CD4-positive, alpha-beta memory T cell (primary cell): ENCODE measurements at regions of chr12 and their contacts with region 1.

Region 1: GRCh38 chr12:54419088-54419892 is at the start of gene ITGA5:
- DNase-seq: peak in 3 of 5 donors; percentile 23 to 57 (median 27)
- H3K4me3 ChIP-seq: peak within 1 kb of the TSS; percentile 55 to 81
- H3K4me3 Mint-ChIP-seq: peak within 1 kb of the TSS; percentile 96 to 98 (median 98)
- H3K27ac ChIP-seq: peak within 1 kb of the TSS; percentile 91
- H3K27ac Mint-ChIP-seq: peak within 1 kb of the TSS; percentile 90 to 99 (median 98)
- H3K4me1 ChIP-seq: peaks cover 46% of the 10 kb centered on the region
- H3K4me1 Mint-ChIP-seq: peaks cover 34 to 73% (median 39%) of the 10 kb centered on the region in 4 donors
- H3K27me3 ChIP-seq: no peaks in the 10 kb centered on the region
- H3K27me3 Mint-ChIP-seq: peaks cover 0 to 1% of the 10 kb centered on the region in 2 donors
- total RNA-seq, gene ITGA5: 158 to 162 TPM

Region 2: DNA sequence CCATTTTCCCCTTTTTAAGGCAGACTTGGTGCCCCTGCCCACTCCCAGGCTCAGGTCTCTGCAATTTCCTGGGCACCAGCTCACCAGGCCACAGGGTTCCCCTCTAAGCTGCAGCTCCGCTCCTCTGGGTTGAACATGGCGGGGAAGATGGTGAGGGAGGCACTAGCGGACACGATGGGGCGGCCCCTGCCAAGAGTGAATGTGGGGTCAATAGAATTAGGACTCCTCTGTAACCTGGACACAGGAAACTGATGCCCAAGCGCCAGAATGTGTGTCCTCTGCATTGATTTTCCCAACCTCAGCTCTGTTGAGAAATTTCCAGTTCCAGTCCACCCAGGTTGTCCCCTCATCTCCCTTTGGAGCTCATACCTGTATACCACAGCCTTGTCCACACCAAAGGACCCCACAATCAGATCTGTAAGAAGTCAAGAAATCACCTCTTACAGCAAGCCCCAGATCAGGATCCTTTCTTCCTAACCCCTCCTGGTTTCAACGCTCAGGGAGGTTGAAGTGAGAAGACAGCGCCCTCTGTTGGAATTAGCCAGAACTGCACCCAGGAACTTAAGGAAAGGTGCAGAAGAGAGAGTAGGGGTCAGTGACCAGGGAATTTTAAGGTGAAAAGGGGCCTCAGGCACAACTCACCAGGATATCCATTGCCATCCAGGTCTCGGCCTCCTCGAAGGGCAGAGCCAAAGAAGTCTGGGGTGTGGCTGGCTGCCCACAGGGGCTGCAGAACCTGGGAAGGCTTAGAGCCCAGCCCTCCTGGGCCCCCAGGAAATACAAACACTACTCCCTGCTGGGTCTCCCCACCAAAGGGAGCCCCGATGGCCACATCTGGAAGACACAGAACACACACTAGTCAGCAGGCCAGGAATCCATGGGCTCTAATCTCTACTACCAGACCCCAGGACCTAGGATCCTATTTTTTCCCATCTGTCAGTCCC is 15.0 kb before region 1 on chr12:
- CTCF ChIA-PET with region 1: interaction called, 938 read pairs
- POLR2A ChIA-PET with region 1: interaction called, 213 read pairs
- intact Hi-C with region 1: loop called (anchors 1 kb)
- DNase-seq: peak; percentile 53 to 71 (median 56)
- H3K4me3 ChIP-seq: no peak overlapping the region
- H3K4me3 Mint-ChIP-seq: no peak overlapping the region
- H3K27ac ChIP-seq: peak overlapping the region; percentile 14
- H3K27ac Mint-ChIP-seq: peak overlapping the region; percentile 74 to 96 (median 91)
- H3K4me1 ChIP-seq: peaks cover 22% of the 10 kb centered on the region
- H3K4me1 Mint-ChIP-seq: peaks cover 21 to 48% (median 37%) of the 10 kb centered on the region in 4 donors
- H3K27me3 ChIP-seq: no peaks in the 10 kb centered on the region
- H3K27me3 Mint-ChIP-seq: no peaks in the 10 kb centered on the region

Region 3: DNA sequence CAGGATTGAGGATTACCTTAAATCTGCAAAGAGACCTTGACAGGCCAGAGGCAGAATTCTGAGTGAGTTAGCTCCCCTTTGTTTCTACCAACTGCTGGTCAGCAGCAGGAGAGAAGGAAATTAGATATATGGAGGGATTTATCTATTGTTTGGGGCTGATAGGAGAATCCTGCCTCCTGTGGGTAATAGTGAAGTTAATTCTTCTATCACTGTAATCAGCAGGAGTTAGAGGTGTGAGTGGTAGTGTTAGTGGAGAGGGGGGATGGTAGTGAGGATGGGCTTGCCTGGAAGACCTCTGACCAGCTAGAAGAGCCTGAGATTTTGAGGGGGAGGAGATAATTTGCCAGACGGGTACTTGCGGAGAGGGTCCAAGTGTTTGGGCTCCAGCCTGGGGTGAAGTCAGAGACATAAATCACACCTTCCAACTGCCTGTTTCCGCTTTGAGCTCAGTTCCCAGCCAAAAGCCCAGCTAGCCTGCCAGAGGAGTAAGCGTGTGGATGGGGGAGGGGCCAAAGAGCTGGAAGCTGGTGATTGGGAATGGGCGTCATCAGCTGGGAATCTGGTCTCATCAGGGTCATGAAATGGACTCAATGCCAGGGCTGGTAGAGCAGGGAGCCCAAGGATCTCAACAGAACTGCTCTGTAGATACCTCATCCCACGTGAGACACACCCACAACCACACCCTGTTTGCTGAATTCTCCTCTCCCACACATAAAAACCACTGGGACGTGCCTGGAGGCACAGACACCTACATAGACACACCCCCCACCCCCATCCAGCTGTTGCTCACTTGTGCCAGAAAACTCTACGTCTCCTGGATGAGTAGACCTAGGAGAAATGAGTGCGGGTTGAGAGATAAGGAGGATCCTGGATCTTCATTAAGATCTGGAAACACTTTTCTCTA is 12.9 kb after region 1 on chr12:
- CTCF ChIA-PET with region 1: interaction called, 123 read pairs
- POLR2A ChIA-PET with region 1: interaction called, 64 read pairs
- intact Hi-C with region 1: loop called (anchors 2 kb)
- DNase-seq: no peak
- H3K4me3 ChIP-seq: no peak overlapping the region
- H3K4me3 Mint-ChIP-seq: peak overlapping the region in 7 of 8 donors; percentile 10 to 75 (median 36)
- H3K27ac ChIP-seq: no peak overlapping the region
- H3K27ac Mint-ChIP-seq: peak overlapping the region in 5 of 7 donors; percentile 28 to 77 (median 68)
- H3K4me1 ChIP-seq: peaks cover 45% of the 10 kb centered on the region
- H3K4me1 Mint-ChIP-seq: peaks cover 21 to 44% (median 37%) of the 10 kb centered on the region in 4 donors
- H3K27me3 ChIP-seq: no peaks in the 10 kb centered on the region
- H3K27me3 Mint-ChIP-seq: no peaks in the 10 kb centered on the region

Region 4: GRCh38 chr12:54439521-54440255 is 20.4 kb after region 1 on chr12:
- CTCF ChIA-PET with region 1: interaction called, 123 read pairs
- POLR2A ChIA-PET with region 1: interaction called, 31 read pairs
- intact Hi-C with region 1: no loop called
- DNase-seq: peak in 4 of 5 donors; percentile 57 to 66 (median 64)
- H3K4me3 ChIP-seq: no peak overlapping the region
- H3K4me3 Mint-ChIP-seq: no peak overlapping the region
- H3K27ac ChIP-seq: no peak overlapping the region
- H3K27ac Mint-ChIP-seq: peak overlapping the region in 6 of 7 donors; percentile 2 to 82 (median 42)
- H3K4me1 ChIP-seq: no peaks in the 10 kb centered on the region
- H3K4me1 Mint-ChIP-seq: peaks cover 3 to 6% (median 4%) of the 10 kb centered on the region in 4 donors
- H3K27me3 ChIP-seq: no peaks in the 10 kb centered on the region
- H3K27me3 Mint-ChIP-seq: peaks cover 0 to 2% of the 10 kb centered on the region in 2 donors

Region 5: DNA sequence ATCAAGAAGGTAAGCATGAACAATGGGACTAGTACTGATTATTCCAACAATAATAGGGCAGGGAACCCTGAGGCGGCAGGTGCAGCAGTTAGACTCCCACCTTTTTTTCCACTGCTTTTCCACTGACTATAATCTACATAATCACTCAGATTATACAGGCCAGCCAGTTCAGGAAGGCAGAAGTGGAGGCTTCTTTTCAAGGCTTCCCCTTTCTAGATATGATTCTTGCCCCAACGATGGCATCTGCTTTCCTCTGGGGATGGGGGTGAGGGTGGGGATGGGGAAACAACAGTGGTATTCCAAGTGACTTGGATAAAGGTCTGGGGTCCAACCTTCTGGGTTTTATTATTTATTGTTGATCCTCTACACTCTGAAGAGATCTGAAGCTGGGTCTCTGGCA is 78.6 kb after region 1 on chr12:
- CTCF ChIA-PET with region 1: interaction called, 4 read pairs
- POLR2A ChIA-PET with region 1: interaction called, 12 read pairs
- intact Hi-C with region 1: loop called (anchors 5 kb)
- DNase-seq: no peak
- H3K4me3 ChIP-seq: peak overlapping the region; percentile 74 to 78
- H3K4me3 Mint-ChIP-seq: peak overlapping the region; percentile 94 to 100 (median 99)
- H3K27ac ChIP-seq: peak overlapping the region; percentile 78
- H3K27ac Mint-ChIP-seq: peak overlapping the region; percentile 88 to 99 (median 98)
- H3K4me1 ChIP-seq: peaks cover 40% of the 10 kb centered on the region
- H3K4me1 Mint-ChIP-seq: peaks cover 33 to 56% (median 37%) of the 10 kb centered on the region in 4 donors
- H3K27me3 ChIP-seq: no peaks in the 10 kb centered on the region
- H3K27me3 Mint-ChIP-seq: no peaks in the 10 kb centered on the region